ENCODE measurements at regions of chr4 and their contacts with region 1.

Region 1: GRCh38 chr4:156870131-156870530 is 101.5 kb downstream of the PDGFC start:
- DNase-seq: no peak
- H3K4me3 ChIP-seq: no peak overlapping the region
- H3K27ac ChIP-seq: no peak overlapping the region
- H3K4me1 ChIP-seq: no peaks in the 10 kb centered on the region
- H3K27me3 ChIP-seq: no peaks in the 10 kb centered on the region
- CTCF ChIP-seq: no peak

Region 2: GRCh38 chr4:156941940-156942548 is 71.9 kb after region 1 on chr4:
- CTCF ChIA-PET with region 1: no interaction called
- POLR2A ChIA-PET with region 1: interaction called, 18 read pairs
- intact Hi-C with region 1: no loop called
- DNase-seq: peak in 1 of 2 experiments; percentile 37
- H3K4me3 ChIP-seq: no peak overlapping the region
- H3K27ac ChIP-seq: no peak overlapping the region
- H3K4me1 ChIP-seq: no peaks in the 10 kb centered on the region
- H3K27me3 ChIP-seq: no peaks in the 10 kb centered on the region
- CTCF ChIP-seq: no peak

Measured in PC-9 (cell line).